A549 (cell line): ENCODE measurements at regions of chr1 and their contacts with region 1.

Region 1: DNA sequence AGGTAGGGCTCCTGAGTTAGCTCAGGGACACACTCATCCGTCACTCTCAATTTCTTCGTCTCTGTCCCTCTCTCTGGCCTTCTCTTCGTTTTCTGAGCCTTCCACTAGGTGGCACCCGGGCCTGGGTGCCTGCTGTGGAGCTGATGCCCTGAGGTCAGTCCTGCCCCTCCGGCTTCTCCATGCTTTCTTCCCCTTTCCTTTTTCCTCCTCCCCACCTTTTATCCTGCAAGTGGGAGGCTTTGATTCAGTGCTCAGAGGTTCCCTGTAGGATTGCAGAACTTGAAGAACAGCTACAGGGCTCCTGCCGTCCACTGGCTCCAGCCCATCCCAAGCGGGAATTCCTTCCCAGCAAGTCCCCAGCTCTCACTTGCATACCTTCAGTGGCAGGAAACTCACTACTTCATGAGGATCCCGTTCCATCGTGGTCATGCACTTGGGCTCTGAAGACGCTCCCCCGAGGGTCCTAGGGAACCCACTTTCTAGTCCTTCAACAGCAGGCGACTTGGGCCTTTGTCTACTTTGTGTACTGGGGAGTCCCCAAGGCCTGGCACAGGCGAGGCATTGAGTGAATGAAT is 45.6 kb downstream of the SRRM1 start:
- DNase-seq: peak; percentile 53 to 67
- ATAC-seq: peak; percentile 89
- H3K4me3 ChIP-seq: no peak overlapping the region
- H3K27ac ChIP-seq: peak overlapping the region; percentile 46 to 67; a peak in 4 of 6 replicates
- H3K4me1 ChIP-seq: peaks cover 6% of the 10 kb centered on the region
- CTCF ChIP-seq: peak; percentile 79
- EP300 ChIP-seq: no peak
- POLR2A ChIP-seq: no peak
- RAD21 ChIP-seq: peak; percentile 85 to 92

Region 2: GRCh38 chr1:24654011-24654410 is 34.7 kb before region 1 on chr1:
- CTCF ChIA-PET with region 1: no interaction called
- POLR2A ChIA-PET with region 1: no interaction called
- DNase-seq: no peak
- ATAC-seq: no peak
- H3K4me3 ChIP-seq: no peak overlapping the region
- H3K27ac ChIP-seq: no peak overlapping the region
- H3K4me1 ChIP-seq: peaks cover 21% of the 10 kb centered on the region
- CTCF ChIP-seq: no peak
- EP300 ChIP-seq: no peak
- POLR2A ChIP-seq: no peak
- RAD21 ChIP-seq: no peak

Region 3: DNA sequence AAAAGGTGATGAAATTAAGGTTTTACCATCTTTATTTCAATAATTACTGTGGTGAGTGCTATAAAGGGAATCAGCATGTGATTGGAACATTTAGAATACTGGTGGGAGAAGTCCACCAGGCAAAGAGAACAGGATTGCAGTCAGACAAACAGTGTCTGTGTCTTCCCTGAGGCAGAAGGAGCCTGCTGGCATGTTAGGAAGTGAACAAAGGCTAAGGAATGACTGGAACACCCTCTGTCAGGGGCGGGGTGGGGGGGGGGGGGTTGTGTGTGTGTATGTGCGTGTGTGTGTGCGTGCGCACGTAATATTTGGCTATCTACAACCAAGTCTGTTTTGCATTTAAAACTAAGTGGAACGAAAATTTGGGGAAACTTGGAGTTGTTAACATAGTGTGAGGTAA is 15.4 kb before region 1 on chr1:
- CTCF ChIA-PET with region 1: interaction called, 11 read pairs
- POLR2A ChIA-PET with region 1: interaction called, 5 read pairs
- DNase-seq: no peak
- ATAC-seq: no peak
- H3K4me3 ChIP-seq: no peak overlapping the region
- H3K27ac ChIP-seq: no peak overlapping the region
- H3K4me1 ChIP-seq: peaks cover 5% of the 10 kb centered on the region
- CTCF ChIP-seq: no peak
- EP300 ChIP-seq: no peak
- POLR2A ChIP-seq: no peak
- RAD21 ChIP-seq: no peak

Region 4: GRCh38 chr1:24705260-24706073 is 16.8 kb after region 1 on chr1:
- CTCF ChIA-PET with region 1: interaction called, 50 read pairs
- POLR2A ChIA-PET with region 1: interaction called, 4 read pairs
- DNase-seq: peak; percentile 91 to 95
- ATAC-seq: peak; percentile 98 to 99
- H3K4me3 ChIP-seq: peak overlapping the region; percentile 33
- H3K27ac ChIP-seq: peak overlapping the region; percentile 67 to 89
- H3K4me1 ChIP-seq: peaks cover 18% of the 10 kb centered on the region
- CTCF ChIP-seq: no peak
- EP300 ChIP-seq: no peak
- POLR2A ChIP-seq: no peak
- RAD21 ChIP-seq: no peak

Region 5: GRCh38 chr1:24732186-24732885 is 43.6 kb after region 1 on chr1:
- CTCF ChIA-PET with region 1: interaction called, 20 read pairs
- POLR2A ChIA-PET with region 1: no interaction called
- DNase-seq: no peak
- ATAC-seq: no peak
- H3K4me3 ChIP-seq: no peak overlapping the region
- H3K27ac ChIP-seq: no peak overlapping the region
- H3K4me1 ChIP-seq: peaks cover 19% of the 10 kb centered on the region; the same call in 2 of the 3 replicates
- CTCF ChIP-seq: no peak
- EP300 ChIP-seq: no peak
- POLR2A ChIP-seq: no peak
- RAD21 ChIP-seq: no peak

Region 6: GRCh38 chr1:24754229-24754628 is 65.5 kb after region 1 on chr1:
- CTCF ChIA-PET with region 1: interaction called, 10 read pairs
- POLR2A ChIA-PET with region 1: no interaction called
- DNase-seq: no peak
- ATAC-seq: no peak
- H3K4me3 ChIP-seq: no peak overlapping the region
- H3K27ac ChIP-seq: no peak overlapping the region
- H3K4me1 ChIP-seq: peaks cover 12% of the 10 kb centered on the region
- CTCF ChIP-seq: no peak
- EP300 ChIP-seq: no peak
- POLR2A ChIP-seq: no peak
- RAD21 ChIP-seq: no peak

Region 7: GRCh38 chr1:24805534-24806301 is 117.0 kb after region 1 on chr1:
- CTCF ChIA-PET with region 1: interaction called, 11 read pairs
- POLR2A ChIA-PET with region 1: interaction called, 3 read pairs
- DNase-seq: no peak
- ATAC-seq: no peak
- H3K4me3 ChIP-seq: no peak overlapping the region
- H3K27ac ChIP-seq: no peak overlapping the region
- H3K4me1 ChIP-seq: peaks cover 8% of the 10 kb centered on the region
- CTCF ChIP-seq: no peak
- EP300 ChIP-seq: no peak
- POLR2A ChIP-seq: no peak
- RAD21 ChIP-seq: no peak

Region 8: GRCh38 chr1:24841593-24841992 is 152.9 kb after region 1 on chr1:
- CTCF ChIA-PET with region 1: interaction called, 73 read pairs
- POLR2A ChIA-PET with region 1: no interaction called
- DNase-seq: no peak
- ATAC-seq: no peak
- H3K4me3 ChIP-seq: no peak overlapping the region
- H3K27ac ChIP-seq: no peak overlapping the region
- H3K4me1 ChIP-seq: no peaks in the 10 kb centered on the region
- CTCF ChIP-seq: no peak
- EP300 ChIP-seq: no peak
- POLR2A ChIP-seq: no peak
- RAD21 ChIP-seq: no peak

Region 9: DNA sequence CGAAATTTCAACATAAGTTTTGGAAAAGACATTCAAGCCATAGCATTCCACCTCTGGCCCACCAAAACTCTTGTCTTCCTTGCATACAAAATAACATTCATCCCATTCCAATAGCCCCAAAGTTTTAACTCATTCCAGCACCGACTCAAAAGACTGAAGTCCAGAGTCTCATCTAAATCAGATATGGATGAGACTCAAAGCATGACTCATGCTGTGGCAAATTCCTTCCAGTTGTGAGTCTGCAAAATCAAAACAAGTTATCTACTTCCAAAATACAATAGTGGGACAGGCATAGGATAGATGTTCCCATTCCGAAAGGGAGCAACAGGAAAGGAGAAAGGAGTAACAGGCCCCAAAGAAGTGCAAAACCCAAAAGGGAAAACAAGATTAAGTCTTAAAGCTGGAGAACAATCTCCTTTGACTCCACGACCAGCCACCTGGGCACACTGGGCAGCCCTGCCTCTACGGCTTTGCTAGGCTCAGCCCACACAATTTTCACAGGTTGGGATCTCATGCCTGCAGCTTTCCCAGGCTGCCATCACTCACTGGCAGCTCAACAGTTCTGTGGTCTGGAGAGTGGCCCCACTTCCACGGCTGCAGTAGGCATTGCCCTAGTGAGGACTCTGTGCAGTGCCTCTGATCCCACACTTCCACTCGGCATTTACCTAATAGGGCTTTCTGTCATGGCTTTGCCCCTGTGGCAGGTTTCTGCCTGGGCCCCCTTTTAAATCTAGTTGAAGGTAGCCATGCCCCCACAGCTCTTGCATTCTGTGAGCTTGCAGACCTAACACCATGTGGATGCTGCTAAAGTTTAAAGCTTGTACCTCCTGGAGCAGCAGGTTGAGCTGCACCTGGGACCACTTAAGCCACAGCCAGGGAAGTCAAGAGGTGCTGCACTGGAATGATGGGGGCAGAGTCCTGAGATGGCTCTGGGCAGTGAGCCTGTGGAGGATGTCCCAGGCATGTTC is 190.4 kb after region 1 on chr1:
- CTCF ChIA-PET with region 1: no interaction called
- POLR2A ChIA-PET with region 1: no interaction called
- DNase-seq: no peak
- ATAC-seq: no peak
- H3K4me3 ChIP-seq: no peak overlapping the region
- H3K27ac ChIP-seq: no peak overlapping the region
- H3K4me1 ChIP-seq: no peaks in the 10 kb centered on the region
- CTCF ChIP-seq: no peak
- EP300 ChIP-seq: no peak
- POLR2A ChIP-seq: no peak
- RAD21 ChIP-seq: no peak

Region 10: DNA sequence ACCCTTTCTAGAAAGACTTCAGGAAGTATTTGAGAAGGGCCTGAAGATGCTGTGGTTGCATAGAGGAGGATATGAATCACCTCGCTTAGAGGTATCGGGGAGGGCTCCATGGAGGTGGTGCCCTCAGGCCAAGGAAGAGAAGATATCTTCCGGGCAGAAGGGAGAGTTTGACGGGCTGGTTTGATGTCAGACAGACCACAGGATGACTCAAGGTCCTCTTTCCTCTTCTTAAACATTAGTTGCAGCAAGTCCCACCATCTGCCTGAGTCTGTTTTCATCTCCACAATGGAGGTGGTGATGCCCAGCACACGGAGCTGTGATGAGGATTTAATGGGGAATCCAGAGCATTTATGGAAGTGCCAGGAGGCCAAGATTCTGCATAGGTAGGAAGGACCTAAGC is 266.5 kb after region 1 on chr1:
- CTCF ChIA-PET with region 1: no interaction called
- POLR2A ChIA-PET with region 1: no interaction called
- DNase-seq: no peak
- ATAC-seq: no peak
- H3K4me3 ChIP-seq: no peak overlapping the region
- H3K27ac ChIP-seq: no peak overlapping the region
- H3K4me1 ChIP-seq: no peaks in the 10 kb centered on the region
- CTCF ChIP-seq: no peak
- EP300 ChIP-seq: no peak
- POLR2A ChIP-seq: no peak
- RAD21 ChIP-seq: no peak